Left colon (tissue), 2 donors: ENCODE measurements at regions of chr16 and their contacts with region 1.

Region 1: GRCh38 chr16:57591086-57591869 is 37.2 kb upstream of the ADGRG1 start:
- DNase-seq: peak; percentile 46 to 77
- ATAC-seq: peak; percentile 97

Region 2: GRCh38 chr16:57648590-57649442 is 57.5 kb after region 1 on chr16:
- intact Hi-C with region 1: loop called (anchors 5 to 10 kb)
- DNase-seq: peak; percentile 64 to 83
- ATAC-seq: peak; percentile 83